ENCODE measurements at regions of chr11 and their contacts with region 1.

Region 1: DNA sequence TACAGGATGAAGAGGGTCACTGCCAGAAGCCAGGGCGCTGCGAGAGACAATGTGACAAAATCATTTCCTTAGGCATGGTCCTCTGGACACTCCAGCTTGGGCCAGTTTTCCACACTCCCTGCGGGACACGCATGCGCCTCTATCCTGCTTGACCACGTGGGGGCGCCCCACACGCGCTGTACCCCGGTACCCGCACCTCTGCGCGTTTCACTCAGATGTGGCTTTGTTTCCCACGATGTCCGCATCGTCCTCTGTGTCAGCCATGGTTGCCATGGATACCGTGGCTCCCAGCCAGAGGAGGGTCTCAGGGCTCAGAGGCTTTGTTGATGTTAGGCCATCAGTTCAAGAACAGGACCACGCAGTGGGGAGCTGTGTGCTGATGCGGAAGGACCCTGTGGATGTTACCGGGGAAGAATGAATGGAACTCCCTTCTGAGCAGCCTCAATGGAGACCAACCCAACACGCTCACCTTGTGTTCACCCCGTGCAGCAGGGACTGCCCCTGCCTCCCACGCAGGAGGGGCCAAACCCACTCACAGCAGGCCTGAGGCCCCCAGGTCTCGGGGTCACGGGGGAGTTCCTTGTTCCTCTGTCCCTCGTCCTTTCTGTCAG is 101.1 kb upstream of the SLC22A12 start:
- DNase-seq: peak; percentile 59
- ATAC-seq: peak; percentile 60
- H3K4me3 Mint-ChIP-seq: no peak overlapping the region
- H3K27ac Mint-ChIP-seq: no peak overlapping the region
- H3K4me1 Mint-ChIP-seq: peaks cover 11% of the 10 kb centered on the region
- H3K27me3 Mint-ChIP-seq: peaks cover 56% of the 10 kb centered on the region

Region 2: DNA sequence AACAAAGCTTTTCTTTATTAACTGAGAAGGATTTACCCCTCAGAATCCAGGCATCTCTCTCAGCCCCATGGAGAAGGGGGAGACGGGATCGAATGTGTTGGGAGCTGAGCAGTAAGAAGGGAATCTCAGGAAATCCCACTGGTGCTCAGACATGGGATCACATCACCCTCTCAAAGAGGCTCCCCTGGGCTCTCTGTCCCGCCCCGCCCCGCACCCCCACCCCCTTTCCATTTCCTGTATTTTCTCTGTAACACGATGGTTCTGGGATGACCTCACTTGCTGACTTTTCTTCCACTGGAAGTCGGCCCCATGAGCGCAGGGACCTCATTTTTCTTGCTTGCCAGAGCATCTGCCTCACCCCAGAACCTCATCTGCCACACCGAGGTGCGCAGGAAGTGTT is 30.9 kb before region 1 on chr11:
- CTCF ChIA-PET with region 1: no interaction called
- DNase-seq: no peak
- ATAC-seq: no peak
- H3K4me3 Mint-ChIP-seq: no peak overlapping the region
- H3K27ac Mint-ChIP-seq: no peak overlapping the region
- H3K4me1 Mint-ChIP-seq: no peaks in the 10 kb centered on the region
- H3K27me3 Mint-ChIP-seq: peaks cover 10% of the 10 kb centered on the region

Region 3: GRCh38 chr11:64652586-64653387 is 162.9 kb after region 1 on chr11:
- CTCF ChIA-PET with region 1: interaction called, 11 read pairs
- DNase-seq: peak; percentile 82
- ATAC-seq: peak; percentile 74
- H3K4me3 Mint-ChIP-seq: no peak overlapping the region
- H3K27ac Mint-ChIP-seq: no peak overlapping the region
- H3K4me1 Mint-ChIP-seq: no peaks in the 10 kb centered on the region
- H3K27me3 Mint-ChIP-seq: peaks cover 5% of the 10 kb centered on the region

Measured in activated CD8-positive, alpha-beta memory T cell treated with anti-CD3 and anti-CD28 coated beads, Interleukin-2, amount 10 ng/mL, durations not matched to agents 7 days and 5 days (primary cell).